ENCODE measurements at regions of chr15 and their contacts with region 1.

Region 1: GRCh38 chr15:44738340-44738984 is 2.1 kb downstream of the TRIM69 start:
- DNase-seq: peak; percentile 66
- H3K4me3 ChIP-seq: no peak overlapping the region
- H3K27ac ChIP-seq: no peak overlapping the region
- H3K4me1 ChIP-seq: peaks cover 2% of the 10 kb centered on the region
- H3K27me3 ChIP-seq: no peaks in the 10 kb centered on the region
- CTCF ChIP-seq: peak; percentile 40 to 45
- POLR2A ChIP-seq: no peak

Region 2: DNA sequence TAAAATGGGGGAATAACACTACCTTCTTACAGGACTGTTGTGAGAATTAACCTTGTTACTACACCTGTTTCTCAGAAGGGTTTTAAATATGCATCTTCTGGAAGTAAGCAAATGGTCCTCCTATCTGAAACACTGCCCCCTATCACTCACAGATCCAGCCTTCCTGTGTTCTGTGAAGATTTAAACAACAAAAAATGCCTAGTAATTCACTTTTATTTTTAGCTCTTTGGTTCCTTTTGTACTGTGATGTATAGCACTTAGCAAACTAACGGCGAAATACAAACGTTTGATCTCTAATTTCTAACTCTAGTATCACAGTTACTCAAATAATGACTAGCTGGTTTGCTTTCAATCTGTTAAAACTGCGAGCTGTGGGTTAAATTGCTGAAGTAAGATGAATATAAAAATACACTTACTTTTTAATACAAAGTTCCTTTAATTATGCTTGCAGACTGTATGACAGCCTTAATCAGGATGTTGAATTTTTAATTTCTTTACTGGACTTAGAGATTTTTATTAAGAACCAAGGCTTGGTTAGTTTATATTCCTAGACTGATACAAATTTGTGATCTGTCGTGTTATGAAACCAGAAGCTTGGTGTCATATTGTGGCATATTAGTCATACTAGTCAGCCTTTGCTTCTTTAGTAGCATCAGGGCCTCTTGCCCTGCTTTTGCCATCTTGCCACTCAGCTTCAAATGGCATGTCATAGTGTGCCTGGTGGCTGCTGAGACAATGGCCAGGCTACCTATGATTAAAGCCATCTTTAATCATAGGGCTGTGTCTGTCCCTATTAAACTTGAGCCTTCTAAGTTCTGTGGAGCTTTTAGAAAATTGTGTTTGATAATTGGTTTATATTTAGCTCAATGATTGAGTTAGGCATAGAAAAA is 192.3 kb before region 1 on chr15:
- CTCF ChIA-PET with region 1: no interaction called
- POLR2A ChIA-PET with region 1: no interaction called
- dilution Hi-C with region 1: no loop called
- intact Hi-C with region 1: no loop called
- DNase-seq: peak; percentile 39
- H3K4me3 ChIP-seq: no peak overlapping the region
- H3K27ac ChIP-seq: no peak overlapping the region
- H3K4me1 ChIP-seq: peaks cover 18% of the 10 kb centered on the region
- H3K27me3 ChIP-seq: no peaks in the 10 kb centered on the region
- CTCF ChIP-seq: peak; percentile 14 to 30
- POLR2A ChIP-seq: no peak

Region 3: GRCh38 chr15:44584162-44584749 is 154.2 kb before region 1 on chr15:
- CTCF ChIA-PET with region 1: interaction called, 65 read pairs
- POLR2A ChIA-PET with region 1: no interaction called
- dilution Hi-C with region 1: loop called (anchors 25 kb)
- intact Hi-C with region 1: no loop called
- DNase-seq: peak; percentile 49
- H3K4me3 ChIP-seq: no peak overlapping the region
- H3K27ac ChIP-seq: no peak overlapping the region
- H3K4me1 ChIP-seq: no peaks in the 10 kb centered on the region
- H3K27me3 ChIP-seq: no peaks in the 10 kb centered on the region
- CTCF ChIP-seq: peak; percentile 52 to 72
- POLR2A ChIP-seq: no peak

Region 4: DNA sequence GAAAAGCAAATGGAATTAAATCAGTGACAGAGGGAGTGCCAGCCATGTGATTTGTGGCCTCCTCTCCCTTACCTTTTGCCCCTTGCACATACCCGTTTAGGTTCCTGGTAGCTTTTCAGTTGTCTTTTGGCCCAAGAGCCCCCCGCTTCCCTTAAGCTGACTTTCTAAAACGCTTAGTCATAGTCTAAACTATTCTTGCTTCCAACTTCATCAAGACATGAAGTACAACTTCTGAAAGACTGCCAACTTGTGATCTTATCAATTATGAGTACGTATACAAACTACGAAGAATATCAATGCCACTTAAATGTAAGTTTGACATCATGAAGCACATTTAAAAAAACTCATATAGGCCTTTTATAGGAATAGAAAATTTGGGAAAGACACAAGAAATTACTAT is 139.6 kb before region 1 on chr15:
- CTCF ChIA-PET with region 1: interaction called, 16 read pairs
- POLR2A ChIA-PET with region 1: no interaction called
- dilution Hi-C with region 1: loop called (anchors 25 kb)
- intact Hi-C with region 1: no loop called
- DNase-seq: peak; percentile 84
- H3K4me3 ChIP-seq: no peak overlapping the region
- H3K27ac ChIP-seq: peak overlapping the region; percentile 71
- H3K4me1 ChIP-seq: peaks cover 23% of the 10 kb centered on the region
- H3K27me3 ChIP-seq: no peaks in the 10 kb centered on the region
- CTCF ChIP-seq: no peak
- POLR2A ChIP-seq: no peak

Region 5: GRCh38 chr15:44722011-44722410 is 16.5 kb before region 1 on chr15:
- CTCF ChIA-PET with region 1: interaction called, 13 read pairs
- POLR2A ChIA-PET with region 1: no interaction called
- dilution Hi-C with region 1: no loop called
- intact Hi-C with region 1: no loop called
- DNase-seq: no peak
- H3K4me3 ChIP-seq: no peak overlapping the region
- H3K27ac ChIP-seq: no peak overlapping the region
- H3K4me1 ChIP-seq: peaks cover 12% of the 10 kb centered on the region
- H3K27me3 ChIP-seq: no peaks in the 10 kb centered on the region
- CTCF ChIP-seq: no peak
- POLR2A ChIP-seq: no peak